AG04450 (cell line): ENCODE measurements at regions of chr1 and their contacts with region 1.

Region 1: DNA sequence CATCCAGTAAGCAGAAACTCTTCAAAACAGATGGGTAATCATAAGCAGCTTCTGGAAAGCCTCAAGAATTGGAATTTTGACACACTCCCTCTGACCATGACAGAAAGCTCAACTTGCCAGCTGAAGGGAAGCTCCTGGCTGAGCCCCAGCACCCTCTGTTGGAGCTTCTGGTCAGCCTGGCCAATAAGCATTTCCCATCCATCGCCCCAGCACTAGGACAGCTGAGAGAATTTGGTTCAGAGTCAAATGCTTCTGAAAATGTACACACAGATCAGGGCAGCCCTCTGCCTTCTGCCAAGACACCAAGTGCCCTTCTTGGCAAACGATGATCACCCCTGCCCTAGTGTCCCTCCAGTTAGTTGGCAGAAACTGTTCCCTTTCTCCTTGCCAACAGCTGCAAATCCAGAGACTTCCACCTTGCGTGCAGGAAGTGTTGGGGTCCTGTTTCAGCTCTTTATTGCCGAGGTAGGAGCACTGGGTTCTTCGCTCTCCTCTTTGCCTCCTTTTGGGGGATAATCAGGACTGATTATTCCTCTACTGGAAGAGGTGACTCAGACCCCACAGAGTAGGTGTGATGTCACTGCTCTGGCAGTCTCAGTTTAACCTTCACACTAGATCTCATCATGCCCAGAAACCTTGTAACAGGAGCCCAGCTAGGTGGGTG is 11.9 kb downstream of the PIGV start:
- DNase-seq: no peak
- H3K4me3 ChIP-seq: peak overlapping the region; percentile 32; the same call in 1 of the 2 replicates
- H3K27ac ChIP-seq: peak overlapping the region; percentile 69
- H3K27me3 ChIP-seq: no peaks in the 10 kb centered on the region
- CTCF ChIP-seq: no peak

Region 2: GRCh38 chr1:26771643-26772321 is 27.8 kb before region 1 on chr1:
- CTCF ChIA-PET with region 1: interaction called, 10 read pairs
- POLR2A ChIA-PET with region 1: interaction called, 3 read pairs
- DNase-seq: peak; percentile 93
- H3K4me3 ChIP-seq: no peak overlapping the region
- H3K27ac ChIP-seq: peak overlapping the region; percentile 97
- H3K27me3 ChIP-seq: no peaks in the 10 kb centered on the region
- CTCF ChIP-seq: no peak

Region 3: GRCh38 chr1:26811057-26811456 is 11.4 kb after region 1 on chr1:
- CTCF ChIA-PET with region 1: interaction called, 25 read pairs
- POLR2A ChIA-PET with region 1: no interaction called
- DNase-seq: no peak
- H3K4me3 ChIP-seq: no peak overlapping the region
- H3K27ac ChIP-seq: no peak overlapping the region
- H3K27me3 ChIP-seq: no peaks in the 10 kb centered on the region
- CTCF ChIP-seq: no peak

Region 4: GRCh38 chr1:26833432-26834405 is 34.1 kb after region 1 on chr1:
- CTCF ChIA-PET with region 1: no interaction called
- POLR2A ChIA-PET with region 1: no interaction called
- DNase-seq: no peak
- H3K4me3 ChIP-seq: no peak overlapping the region
- H3K27ac ChIP-seq: no peak overlapping the region
- H3K27me3 ChIP-seq: no peaks in the 10 kb centered on the region
- CTCF ChIP-seq: no peak

Region 5: GRCh38 chr1:26864610-26865527 is 65.3 kb after region 1 on chr1:
- CTCF ChIA-PET with region 1: no interaction called
- POLR2A ChIA-PET with region 1: interaction called, 12 read pairs
- DNase-seq: peak; percentile 96
- H3K4me3 ChIP-seq: peak overlapping the region; percentile 73
- H3K27ac ChIP-seq: peak overlapping the region; percentile 97
- H3K27me3 ChIP-seq: no peaks in the 10 kb centered on the region
- CTCF ChIP-seq: no peak

Region 6: DNA sequence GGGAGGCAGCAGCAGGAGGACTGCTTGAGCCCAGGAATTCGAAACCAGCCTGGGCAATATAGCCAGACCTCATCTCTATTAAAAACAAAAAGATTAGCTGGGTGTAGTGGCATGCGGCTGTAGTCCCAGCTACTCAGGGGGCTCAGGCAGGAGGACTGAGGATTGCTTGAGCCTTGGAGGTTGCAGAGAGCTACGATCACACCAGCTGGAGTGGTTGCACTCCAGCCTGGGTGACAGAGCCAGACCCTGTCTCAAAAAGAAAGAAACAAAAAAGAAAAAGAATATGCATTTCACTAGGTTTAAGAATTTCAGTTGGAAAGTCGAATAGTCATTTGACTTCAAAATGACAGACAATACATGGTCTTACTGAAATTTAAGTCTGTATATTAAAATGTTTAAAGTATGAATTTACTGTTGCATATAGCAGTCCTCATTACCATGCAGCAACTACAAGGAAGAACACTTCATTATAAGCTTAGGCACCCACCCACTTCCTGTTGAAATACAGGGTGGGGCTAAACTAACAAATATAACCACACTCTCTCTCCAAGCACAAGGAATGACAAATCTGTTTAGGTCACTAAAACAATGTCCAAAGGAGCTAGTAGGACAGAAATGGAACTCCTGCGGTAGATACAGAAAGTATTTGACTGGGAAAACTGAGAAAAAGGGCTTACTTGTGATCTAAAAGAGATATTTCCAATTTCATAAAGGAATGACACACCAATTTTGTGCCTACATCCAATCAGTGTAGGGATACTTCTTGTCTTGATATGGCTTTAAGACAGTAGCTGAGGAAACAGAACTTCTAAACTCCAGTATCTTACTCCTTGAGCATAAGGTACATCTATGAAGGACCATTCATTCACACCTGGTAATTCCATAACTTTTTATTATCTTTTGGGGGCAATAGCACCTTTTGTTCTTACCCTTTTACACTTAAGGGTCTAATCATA is 636.9 kb after region 1 on chr1:
- CTCF ChIA-PET with region 1: no interaction called
- POLR2A ChIA-PET with region 1: no interaction called
- DNase-seq: no peak
- H3K4me3 ChIP-seq: no peak overlapping the region
- H3K27ac ChIP-seq: no peak overlapping the region
- H3K27me3 ChIP-seq: no peaks in the 10 kb centered on the region
- CTCF ChIP-seq: no peak